ENCODE measurements at regions of chr19 and their contacts with region 1.

Region 1: DNA sequence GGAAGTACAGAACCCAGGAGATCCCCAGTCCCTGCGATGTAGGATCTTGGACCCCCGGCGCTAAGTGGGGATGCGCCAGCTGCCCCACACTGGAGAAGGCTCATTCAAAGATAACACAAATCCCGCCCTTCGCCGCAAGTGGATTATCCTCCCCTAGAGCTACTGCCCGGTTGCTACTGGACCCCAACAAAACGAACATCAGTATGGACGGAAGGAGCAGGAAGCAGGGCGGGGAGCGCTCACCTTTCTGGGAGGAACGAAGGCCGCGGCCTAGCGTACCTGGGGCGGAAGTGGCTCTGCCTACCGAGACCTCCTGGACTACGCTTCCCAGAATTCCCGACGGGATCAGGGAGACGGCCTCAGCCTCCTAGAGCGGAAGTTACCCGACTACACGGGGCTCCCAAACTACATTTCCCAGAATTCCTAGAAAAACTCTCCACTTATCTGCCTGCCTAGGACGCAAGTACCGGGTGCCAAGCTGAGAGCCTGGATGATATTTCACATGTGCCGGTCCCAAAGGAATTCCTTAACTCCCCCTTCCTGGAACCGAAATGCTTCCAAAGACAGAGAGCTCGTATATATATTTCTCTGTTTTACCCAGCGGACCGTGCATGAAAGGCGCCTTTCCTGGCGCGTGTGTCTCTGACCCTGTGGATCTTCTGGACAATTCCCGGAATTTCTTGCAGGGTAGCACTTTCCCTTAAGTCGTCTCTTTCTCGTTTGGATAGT is at the start of gene ZNF112:
- DNase-seq: peak; percentile 90 to 91
- ATAC-seq: peak; percentile 99
- H3K4me3 ChIP-seq: peak within 1 kb of the TSS; percentile 34 to 82
- H3K27ac ChIP-seq: peak within 1 kb of the TSS in 1 of 2 donors; percentile 17
- H3K4me1 ChIP-seq: no peaks in the 10 kb centered on the region
- H3K27me3 ChIP-seq: no peaks in the 10 kb centered on the region
- total RNA-seq, gene ZNF112: 4.9 to 8.0 TPM

Region 2: DNA sequence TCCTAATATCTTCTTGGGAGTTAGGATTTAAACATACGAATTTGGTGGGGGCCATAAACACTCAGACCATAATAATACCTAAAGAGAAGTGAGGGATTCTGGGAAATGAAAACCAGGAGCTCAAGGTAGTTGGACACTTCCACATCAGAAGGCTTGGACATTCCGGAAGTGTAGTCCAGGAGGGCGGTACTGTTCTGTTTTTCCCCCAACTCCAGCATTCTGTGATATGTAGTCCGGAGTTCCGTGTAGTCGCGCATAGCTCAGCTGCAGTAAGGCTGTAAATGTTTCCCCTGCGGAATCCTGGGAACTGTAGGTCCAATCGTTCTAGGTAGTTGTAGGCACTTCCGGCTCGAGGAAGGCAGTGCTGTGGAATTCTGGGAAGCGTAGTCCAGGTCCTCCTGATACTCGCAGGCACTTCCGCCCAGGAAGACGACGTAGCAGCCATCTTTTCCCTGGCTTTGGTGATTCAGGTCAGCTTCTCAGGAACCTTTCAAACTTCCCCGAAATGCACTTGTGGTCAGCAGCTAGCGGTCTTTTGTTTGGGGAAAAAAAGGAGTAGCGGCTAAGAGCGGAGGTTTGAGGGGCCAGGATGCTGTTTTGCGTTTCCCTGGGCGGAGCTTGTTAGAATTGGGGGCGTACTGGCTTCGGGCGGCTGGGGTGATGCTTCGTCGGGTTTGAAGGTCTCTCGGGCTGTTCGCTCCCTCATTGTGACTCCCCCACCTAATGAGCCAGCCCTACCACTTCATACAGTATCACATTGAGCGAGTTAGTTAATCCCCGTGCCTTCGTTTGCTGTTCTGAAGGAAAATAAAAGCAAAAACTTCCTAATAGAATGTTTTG is 191.7 kb before region 1 on chr19 and contains the start of gene ZNF226:
- intact Hi-C with region 1: loop called in 1 of 2 experiments (anchors 10 kb)
- DNase-seq: peak; percentile 91 to 93
- ATAC-seq: peak; percentile 99
- H3K4me3 ChIP-seq: peak within 1 kb of the TSS; percentile 54 to 87
- H3K27ac ChIP-seq: peak within 1 kb of the TSS; percentile 60 to 85
- H3K4me1 ChIP-seq: peaks cover 2 to 4% of the 10 kb centered on the region in 2 donors
- H3K27me3 ChIP-seq: no peaks in the 10 kb centered on the region
- total RNA-seq, gene ZNF226: 15.8 to 23.6 TPM

Region 3: GRCh38 chr19:44212250-44212865 is 144.2 kb before region 1 on chr19 and contains the start of gene ZNF227:
- intact Hi-C with region 1: loop called in 1 of 2 experiments (anchors 10 kb)
- DNase-seq: peak; percentile 96 to 97
- ATAC-seq: peak; percentile 98
- H3K4me3 ChIP-seq: peak within 1 kb of the TSS; percentile 64 to 92
- H3K27ac ChIP-seq: peak within 1 kb of the TSS in 1 of 2 donors; percentile 60
- H3K4me1 ChIP-seq: peaks cover 0 to 3% of the 10 kb centered on the region in 2 donors
- H3K27me3 ChIP-seq: no peaks in the 10 kb centered on the region
- total RNA-seq, gene ZNF227: 17.9 to 27.5 TPM

Region 4: DNA sequence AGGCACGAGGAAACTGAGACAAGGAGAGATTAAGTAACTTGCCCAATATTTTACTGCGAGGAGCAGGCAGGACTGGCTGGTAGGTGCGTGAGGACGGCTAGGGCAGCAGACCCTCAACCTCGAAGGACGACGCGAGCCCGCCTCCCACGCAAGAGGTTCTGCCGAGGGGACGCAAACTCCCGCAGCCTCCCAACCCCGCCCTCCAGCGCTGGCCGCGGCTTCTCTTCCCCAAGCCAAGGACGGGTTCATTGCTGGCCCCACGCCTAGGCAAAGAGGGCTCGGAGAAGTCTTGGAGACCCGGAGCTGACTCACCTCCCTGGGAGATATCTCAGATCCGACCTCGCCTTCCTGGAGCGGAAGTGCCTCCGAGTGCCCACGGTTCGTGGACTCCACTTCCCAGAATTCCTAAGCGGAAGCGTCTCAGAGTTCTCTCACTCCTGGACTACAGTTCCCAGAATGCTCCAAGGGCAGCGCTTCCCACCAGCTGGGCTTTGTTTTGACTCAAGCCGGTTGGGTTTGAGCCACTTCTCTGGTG is 51.8 kb before region 1 on chr19 and contains the start of gene ZNF235:
- intact Hi-C with region 1: loop called in 1 of 2 experiments (anchors 5 kb)
- DNase-seq: peak; percentile 95 to 96
- ATAC-seq: peak; percentile 99
- H3K4me3 ChIP-seq: peak within 1 kb of the TSS; percentile 62 to 76
- H3K27ac ChIP-seq: peak within 1 kb of the TSS in 1 of 2 donors; percentile 65
- H3K4me1 ChIP-seq: no peaks in the 10 kb centered on the region
- H3K27me3 ChIP-seq: no peaks in the 10 kb centered on the region
- total RNA-seq, gene ZNF235: 6.2 to 11.0 TPM

Region 5: DNA sequence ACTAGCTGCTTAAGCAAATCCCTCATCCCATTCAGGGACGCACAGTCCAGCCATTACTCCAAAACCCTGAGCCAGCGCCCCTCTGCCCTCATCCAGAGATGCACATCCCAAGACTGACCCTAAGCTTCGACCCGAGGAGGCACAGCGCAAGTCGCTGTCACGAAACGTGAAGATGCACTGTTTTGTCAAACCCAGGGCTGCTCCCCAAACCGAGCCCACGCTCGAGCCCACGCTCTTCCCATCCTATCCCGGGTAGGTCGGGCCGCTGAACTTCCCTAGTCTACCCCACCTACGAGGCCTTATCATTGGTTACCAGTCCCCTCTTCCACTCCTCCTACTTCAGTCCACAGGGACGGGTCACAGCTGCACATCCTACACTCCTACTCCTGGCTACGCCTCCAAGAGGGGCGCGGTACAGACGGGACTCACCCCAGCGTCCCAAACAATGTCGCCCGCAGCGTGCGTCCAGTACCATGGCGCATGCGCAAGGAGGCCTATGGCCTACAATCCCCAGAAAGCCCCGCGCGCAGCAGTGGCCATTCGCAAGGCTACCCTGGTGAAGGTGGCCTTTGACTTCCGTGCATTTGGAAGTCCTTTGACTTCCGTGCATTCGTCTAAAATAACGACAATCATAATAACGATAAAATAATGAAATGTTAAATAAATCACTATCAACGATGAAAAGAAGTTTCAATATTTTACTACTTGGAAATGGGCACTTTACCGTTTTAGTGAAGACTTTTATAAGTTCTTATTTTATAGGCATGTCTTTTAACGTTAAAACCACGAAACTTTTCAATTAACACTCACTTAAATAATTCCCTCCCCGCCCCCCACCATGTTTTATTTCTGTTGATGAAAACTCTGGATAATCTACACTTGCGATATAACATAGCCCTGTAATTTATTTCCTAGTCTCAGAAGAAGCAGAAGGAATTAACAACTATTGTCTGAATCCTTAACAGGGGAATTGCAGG is 44.9 kb after region 1 on chr19 and contains the start of gene ZNF285:
- intact Hi-C with region 1: no loop called
- DNase-seq: peak; percentile 95 to 96
- ATAC-seq: peak; percentile 98
- H3K4me3 ChIP-seq: peak within 1 kb of the TSS in 1 of 2 donors; percentile 18
- H3K27ac ChIP-seq: no peak within 1 kb of the TSS
- H3K4me1 ChIP-seq: no peaks in the 10 kb centered on the region
- H3K27me3 ChIP-seq: no peaks in the 10 kb centered on the region
- total RNA-seq, gene ZNF285: 0.84 to 3.1 TPM